PC-9 (cell line): ENCODE measurements at regions of chr1 and their contacts with region 1.

Region 1: DNA sequence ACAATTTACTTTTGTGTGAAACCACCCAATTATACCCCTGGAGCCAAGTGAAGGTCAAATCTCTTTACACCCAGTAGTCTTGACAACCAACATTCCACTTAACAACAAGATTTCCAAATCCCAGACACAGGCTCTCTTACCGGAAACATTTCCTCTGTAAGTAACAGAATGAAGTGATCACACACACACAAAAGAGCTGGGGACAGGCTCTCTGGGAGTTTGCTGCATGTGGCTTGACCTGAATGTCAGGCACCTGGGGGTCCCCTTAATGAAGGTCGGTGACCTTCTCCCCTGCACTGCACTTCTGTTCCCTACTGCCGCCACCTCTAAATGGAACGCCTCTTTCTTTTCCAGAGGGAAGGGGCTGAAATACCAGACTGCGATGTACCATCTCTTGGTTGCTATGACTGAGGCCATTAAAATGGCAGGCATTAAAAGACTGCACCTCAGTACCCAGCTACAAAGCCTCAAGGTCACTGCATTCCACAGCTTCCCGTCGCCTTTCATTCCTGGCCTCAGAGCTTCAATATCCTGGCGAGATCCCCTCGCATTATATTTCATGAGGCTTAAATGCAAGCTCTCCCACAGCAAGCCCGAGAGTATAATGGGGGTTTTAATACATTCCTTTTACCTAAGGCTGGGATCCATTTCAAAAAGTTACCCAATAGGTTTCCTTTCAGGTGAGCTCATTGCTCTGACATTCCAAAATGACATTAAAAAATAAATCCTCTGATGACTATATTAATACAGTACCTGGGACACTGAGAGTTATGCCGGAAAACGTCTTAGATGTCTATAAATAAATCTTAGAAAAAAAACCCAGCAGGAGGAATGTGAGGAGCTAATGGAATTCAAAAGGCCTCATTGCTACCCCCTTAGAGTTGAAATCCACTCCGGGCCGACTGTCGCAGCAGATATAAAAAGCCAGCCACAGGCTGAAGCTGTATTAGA is 90.9 kb upstream of the DIRAS3 start:
- DNase-seq: no peak
- H3K4me3 ChIP-seq: no peak overlapping the region
- H3K27ac ChIP-seq: no peak overlapping the region
- H3K4me1 ChIP-seq: peaks cover 14% of the 10 kb centered on the region
- H3K27me3 ChIP-seq: no peaks in the 10 kb centered on the region
- CTCF ChIP-seq: no peak

Region 2: DNA sequence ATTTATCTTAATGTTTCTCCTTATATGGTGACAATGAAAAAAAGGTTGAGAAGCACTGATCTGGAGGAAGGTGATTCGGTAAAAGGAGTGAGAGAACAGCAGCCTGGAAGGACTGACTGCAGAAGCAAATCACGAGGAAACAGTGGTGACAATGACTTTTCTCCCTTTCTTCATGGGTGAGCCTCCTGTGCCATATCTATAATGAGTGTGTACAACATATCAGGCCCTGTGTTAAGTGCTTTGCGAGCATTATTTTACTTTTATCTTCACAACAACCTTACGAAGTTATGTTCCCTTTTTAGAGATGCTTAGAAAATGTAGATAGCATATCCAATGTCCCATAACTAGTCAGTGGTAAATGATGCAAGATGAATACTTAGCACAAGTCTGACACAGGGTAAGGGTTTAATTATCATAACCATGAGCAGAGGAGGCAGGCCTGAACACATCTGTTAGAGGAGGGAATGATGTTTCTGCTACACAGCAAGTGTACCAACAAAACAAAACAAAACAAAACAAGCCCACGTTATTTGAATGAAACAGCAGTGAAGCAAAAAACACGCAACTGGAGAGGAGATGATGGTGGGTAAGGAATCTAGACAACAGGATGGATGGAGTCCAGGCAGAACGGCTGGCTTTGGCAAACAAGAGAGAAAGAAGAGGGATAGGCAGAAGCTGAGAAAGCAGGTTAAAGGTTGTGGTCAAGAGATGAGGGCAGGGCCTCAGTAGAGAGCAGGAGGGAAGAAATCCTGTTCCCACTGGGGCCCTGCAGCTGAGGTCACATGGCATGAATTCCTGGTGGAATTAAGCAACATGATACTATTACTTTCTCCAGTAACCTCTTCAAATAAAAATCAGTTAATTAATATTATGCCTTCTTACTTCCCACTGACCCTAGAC is 337.7 kb before region 1 on chr1:
- CTCF ChIA-PET with region 1: no interaction called
- POLR2A ChIA-PET with region 1: interaction called, 10 read pairs
- intact Hi-C with region 1: no loop called
- DNase-seq: no peak
- H3K4me3 ChIP-seq: no peak overlapping the region
- H3K27ac ChIP-seq: no peak overlapping the region
- H3K4me1 ChIP-seq: peaks cover 11% of the 10 kb centered on the region; the same call in 1 of the 2 replicates
- H3K27me3 ChIP-seq: no peaks in the 10 kb centered on the region
- CTCF ChIP-seq: no peak

Region 3: GRCh38 chr1:69103705-69104385 is 962.5 kb after region 1 on chr1:
- CTCF ChIA-PET with region 1: no interaction called
- POLR2A ChIA-PET with region 1: no interaction called
- intact Hi-C with region 1: no loop called
- DNase-seq: peak in 1 of 2 experiments; percentile 5
- H3K4me3 ChIP-seq: no peak overlapping the region
- H3K27ac ChIP-seq: no peak overlapping the region
- H3K4me1 ChIP-seq: no peaks in the 10 kb centered on the region
- H3K27me3 ChIP-seq: no peaks in the 10 kb centered on the region
- CTCF ChIP-seq: no peak